ENCODE measurements at regions of chr3 and their contacts with region 1.

Region 1: GRCh38 chr3:66038726-66039589 is at the start of gene MAGI1:
- DNase-seq: peak; percentile 78 to 98 (median 86)

Region 2: GRCh38 chr3:65070968-65071367 is 968.0 kb before region 1 on chr3:
- intact Hi-C with region 1: no loop called
- DNase-seq: no peak

Region 3: GRCh38 chr3:65883613-65884012 is 155.3 kb before region 1 on chr3:
- intact Hi-C with region 1: no loop called
- DNase-seq: no peak

Region 4: DNA sequence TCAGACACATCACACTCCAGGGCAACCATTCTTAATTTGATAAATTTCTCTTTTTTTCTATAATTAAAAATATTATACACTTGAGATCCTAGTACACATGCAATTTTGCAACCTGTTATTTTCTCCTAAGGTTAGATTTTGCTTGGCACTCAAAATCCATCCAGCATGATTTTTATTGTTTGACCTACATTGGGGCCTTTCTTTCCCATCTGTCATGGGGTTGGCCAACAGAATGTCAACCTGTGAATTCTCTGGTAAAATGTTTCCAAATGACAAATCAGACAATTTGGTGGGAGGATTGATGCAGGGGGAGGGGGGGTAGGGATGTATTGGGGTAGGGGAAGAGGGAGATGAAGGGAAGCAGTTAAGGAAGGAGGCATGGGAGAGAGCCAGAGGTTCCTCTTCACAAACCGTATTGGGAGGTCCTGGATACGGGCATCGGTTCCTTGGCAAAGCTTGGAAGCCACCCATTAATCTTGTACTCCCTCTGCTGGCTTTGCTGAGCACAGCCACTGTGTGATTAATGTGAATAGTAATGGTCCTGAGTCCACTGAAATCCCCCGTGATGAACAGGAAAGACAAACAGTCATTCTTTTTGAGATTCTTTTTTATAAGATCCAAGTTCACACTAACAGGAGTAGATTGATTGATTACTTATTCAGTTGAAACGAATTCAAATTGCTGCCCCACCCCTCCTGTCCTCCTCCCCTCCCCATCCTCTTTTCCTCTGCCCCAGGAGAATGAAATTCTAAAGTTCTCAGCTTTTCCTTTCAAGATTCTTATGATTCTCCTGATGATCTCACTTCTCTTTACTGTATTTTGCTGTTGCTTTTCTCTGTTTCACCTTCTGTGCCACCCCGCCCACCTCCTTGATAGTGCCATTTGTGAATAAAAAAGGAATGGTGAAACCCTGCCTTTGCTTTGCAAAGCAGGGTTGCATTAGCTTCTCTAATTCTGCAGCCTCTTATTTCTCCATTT is 99.7 kb after region 1 on chr3:
- intact Hi-C with region 1: loop called (anchors 10 kb)
- DNase-seq: peak in 5 of 10 donors; percentile 28 to 46 (median 39)

Region 5: GRCh38 chr3:66195347-66195783 is 156.4 kb after region 1 on chr3:
- intact Hi-C with region 1: loop called (anchors 10 kb)
- DNase-seq: peak; percentile 57 to 96 (median 83)

Region 6: DNA sequence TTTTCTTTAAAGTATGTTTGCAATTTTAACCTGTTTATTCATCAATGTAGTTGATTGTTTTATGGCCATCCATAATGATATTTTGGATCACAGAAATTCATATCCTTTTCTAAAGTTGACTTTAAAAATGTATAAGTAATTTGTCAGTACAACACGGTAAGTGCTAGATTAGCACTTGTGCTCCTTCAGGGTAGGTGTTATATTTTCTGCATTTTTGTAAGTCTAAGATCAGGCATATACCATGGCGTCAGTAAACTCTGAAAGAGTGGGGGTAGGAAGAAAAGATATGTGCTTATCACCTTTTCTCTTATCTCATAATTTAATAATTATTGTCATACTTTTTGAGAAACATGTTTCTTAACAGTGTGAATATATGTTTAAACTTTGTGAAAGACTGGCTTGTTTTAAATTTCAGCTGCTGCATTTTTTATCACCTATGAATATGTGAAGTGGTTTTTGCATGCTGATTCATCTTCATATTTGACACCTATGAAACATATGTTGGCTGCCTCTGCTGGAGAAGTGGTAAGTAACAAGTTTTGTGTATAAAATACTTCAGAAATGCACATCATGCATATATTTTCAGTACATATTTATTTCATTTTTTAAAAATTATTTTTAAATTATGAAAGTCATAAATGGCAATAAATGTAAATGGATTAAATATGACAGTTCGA is 204.0 kb after region 1 on chr3:
- intact Hi-C with region 1: no loop called
- DNase-seq: no peak

Measured in posterior cingulate gyrus (tissue), 11 donors.